A549 (cell line): ENCODE measurements at regions of chr10 and their contacts with region 1.

Region 1: GRCh38 chr10:113454341-113455061 is 98.4 kb upstream of the HABP2 start:
- DNase-seq: peak; percentile 44 to 65
- ATAC-seq: peak; percentile 75 to 94
- H3K4me3 ChIP-seq: no peak overlapping the region
- H3K27ac ChIP-seq: no peak overlapping the region
- H3K4me1 ChIP-seq: no peaks in the 10 kb centered on the region
- CTCF ChIP-seq: peak; percentile 84
- EP300 ChIP-seq: no peak
- POLR2A ChIP-seq: no peak
- RAD21 ChIP-seq: peak; percentile 79 to 80

Region 2: GRCh38 chr10:112981553-112981952 is 472.9 kb before region 1 on chr10:
- CTCF ChIA-PET with region 1: no interaction called
- POLR2A ChIA-PET with region 1: no interaction called
- DNase-seq: no peak
- ATAC-seq: no peak
- H3K4me3 ChIP-seq: no peak overlapping the region
- H3K27ac ChIP-seq: no peak overlapping the region
- H3K4me1 ChIP-seq: peaks cover 18% of the 10 kb centered on the region
- CTCF ChIP-seq: no peak
- EP300 ChIP-seq: no peak
- POLR2A ChIP-seq: no peak
- RAD21 ChIP-seq: no peak

Region 3: DNA sequence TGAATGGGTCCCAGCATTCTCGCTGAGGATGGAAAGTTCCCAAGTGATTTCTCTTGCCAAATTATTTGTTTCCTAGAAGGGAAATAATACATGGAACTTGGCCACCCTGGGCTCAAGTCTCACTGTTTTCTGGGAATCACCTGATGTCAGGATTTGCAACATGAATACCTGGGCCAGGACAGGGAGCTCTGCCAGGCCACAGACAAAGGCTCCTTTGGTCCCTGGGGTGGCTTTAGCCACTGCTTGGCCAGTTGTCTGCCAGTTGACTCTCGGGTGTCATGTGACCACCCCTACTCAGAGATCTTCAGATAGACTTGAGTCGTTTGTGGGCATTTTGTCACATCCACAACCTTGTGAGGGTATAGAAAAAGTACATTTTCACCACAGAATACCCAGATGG is 159.6 kb before region 1 on chr10:
- CTCF ChIA-PET with region 1: no interaction called
- POLR2A ChIA-PET with region 1: no interaction called
- DNase-seq: no peak
- ATAC-seq: no peak
- H3K4me3 ChIP-seq: no peak overlapping the region
- H3K27ac ChIP-seq: no peak overlapping the region
- H3K4me1 ChIP-seq: peaks cover 9% of the 10 kb centered on the region; the same call in 2 of the 3 replicates
- CTCF ChIP-seq: no peak
- EP300 ChIP-seq: no peak
- POLR2A ChIP-seq: no peak
- RAD21 ChIP-seq: no peak

Region 4: GRCh38 chr10:113441220-113441619 is 13.3 kb before region 1 on chr10:
- CTCF ChIA-PET with region 1: interaction called, 54 read pairs
- POLR2A ChIA-PET with region 1: no interaction called
- DNase-seq: no peak
- ATAC-seq: peak in 1 of 2 experiments; percentile 64; a peak in 3 of 6 replicates
- H3K4me3 ChIP-seq: no peak overlapping the region
- H3K27ac ChIP-seq: no peak overlapping the region
- H3K4me1 ChIP-seq: no peaks in the 10 kb centered on the region
- CTCF ChIP-seq: no peak
- EP300 ChIP-seq: no peak
- POLR2A ChIP-seq: no peak
- RAD21 ChIP-seq: peak in 1 of 2 experiments; percentile 38; a peak in 1 of 5 replicates

Region 5: DNA sequence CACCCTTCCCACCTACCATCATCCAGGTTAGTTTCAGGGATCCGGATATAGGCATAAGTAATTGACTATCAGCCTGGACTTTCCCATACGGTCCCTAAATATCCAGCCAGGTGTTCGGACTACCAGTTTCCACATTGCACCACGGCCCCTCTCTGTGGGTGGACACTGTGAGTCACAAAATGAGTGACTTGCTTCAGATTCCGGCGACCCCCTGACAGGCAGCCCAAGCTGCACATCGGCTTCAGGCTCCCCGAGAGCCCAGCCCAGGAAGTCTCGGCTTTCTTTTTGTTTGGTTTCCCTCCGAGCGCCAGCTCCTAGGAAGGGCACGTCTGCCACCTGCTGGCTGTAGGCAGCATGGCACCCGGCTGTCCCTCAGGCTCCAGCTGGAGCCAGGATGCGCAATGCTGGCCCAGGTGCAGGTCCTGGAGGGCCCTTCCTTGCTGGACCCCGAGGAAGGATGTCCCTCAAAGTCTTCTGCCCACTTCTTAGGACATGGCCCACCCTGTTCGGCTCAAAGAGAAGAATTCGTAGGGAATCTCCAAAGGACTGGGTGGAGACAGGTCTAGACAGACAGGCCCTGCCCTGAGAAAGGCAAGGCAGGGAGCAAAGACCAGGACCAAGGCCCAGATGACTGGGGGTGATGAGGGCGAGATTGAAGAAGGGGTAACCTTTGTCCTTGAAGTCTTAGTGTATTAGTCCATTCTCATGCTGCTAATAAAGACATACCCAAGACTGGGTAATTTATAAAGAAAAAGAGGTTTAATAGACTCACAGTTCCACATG is 109.0 kb after region 1 on chr10:
- CTCF ChIA-PET with region 1: interaction called, 12 read pairs
- POLR2A ChIA-PET with region 1: no interaction called
- DNase-seq: peak; percentile 65 to 83
- ATAC-seq: peak; percentile 96 to 97
- H3K4me3 ChIP-seq: peak overlapping the region; percentile 30
- H3K27ac ChIP-seq: peak overlapping the region; percentile 9 to 70; a peak in 4 of 6 replicates
- H3K4me1 ChIP-seq: no peaks in the 10 kb centered on the region
- CTCF ChIP-seq: peak; percentile 92
- EP300 ChIP-seq: no peak
- POLR2A ChIP-seq: no peak
- RAD21 ChIP-seq: peak; percentile 89 to 93